ENCODE measurements at regions of chr4 and their contacts with region 1.

Region 1: GRCh38 chr4:122224348-122224747 is 72.2 kb downstream of the BLTP1 start:
- DNase-seq: peak in 1 of 2 donors; percentile 5
- ATAC-seq: no peak
- H3K4me3 ChIP-seq: no peak overlapping the region
- H3K27ac ChIP-seq: no peak overlapping the region
- H3K4me1 ChIP-seq: peaks cover 0 to 4% (median 0%) of the 10 kb centered on the region in 9 donors
- H3K27me3 ChIP-seq: no peaks in the 10 kb centered on the region
- CTCF ChIP-seq: peak in 4 of 9 donors; percentile 29 to 45 (median 34)

Region 2: DNA sequence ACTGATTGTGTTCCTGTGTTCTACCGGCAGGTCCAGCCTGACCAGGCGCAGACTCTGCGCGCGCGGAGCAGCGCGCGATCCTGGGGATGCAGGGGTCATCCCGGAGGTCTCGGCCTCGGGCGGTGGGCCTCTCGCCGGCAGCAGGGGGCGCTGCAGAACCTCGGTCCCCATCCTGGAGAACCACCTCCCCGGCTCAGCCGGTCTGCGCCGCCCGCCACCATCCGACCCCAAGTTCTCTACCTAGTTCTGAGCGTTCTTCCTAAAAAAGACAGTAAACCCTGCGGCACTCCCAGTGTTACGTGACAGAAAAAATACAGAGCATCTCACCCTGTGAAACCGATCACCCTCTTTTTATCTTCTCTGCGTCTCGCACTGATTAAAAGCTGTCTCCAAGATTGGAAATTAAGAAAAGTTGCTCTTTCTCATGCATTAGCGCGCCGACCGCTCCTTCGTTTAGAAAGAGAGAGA is 274.1 kb before region 1 on chr4:
- intact Hi-C with region 1: loop called in 2 of 10 experiments (anchors 5 to 10 kb)
- DNase-seq: peak; percentile 75 to 85
- ATAC-seq: peak; percentile 88 to 97 (median 93)
- H3K4me3 ChIP-seq: peak overlapping the region; percentile 54 to 65 (median 62)
- H3K27ac ChIP-seq: peak overlapping the region in 1 of 10 donors; percentile 45
- H3K4me1 ChIP-seq: peaks cover 0 to 23% (median 17%) of the 10 kb centered on the region in 9 donors
- H3K27me3 ChIP-seq: peaks cover 4 to 81% (median 61%) of the 10 kb centered on the region in 7 donors
- CTCF ChIP-seq: peak; percentile 51 to 88 (median 77)

Region 3: GRCh38 chr4:121998002-121998401 is 226.3 kb before region 1 on chr4:
- intact Hi-C with region 1: loop called in 1 of 10 experiments (anchors 2 kb)
- DNase-seq: peak in 1 of 2 donors; percentile 4
- ATAC-seq: peak in 3 of 8 donors; percentile 21 to 74 (median 69)
- H3K4me3 ChIP-seq: no peak overlapping the region
- H3K27ac ChIP-seq: no peak overlapping the region
- H3K4me1 ChIP-seq: no peaks in the 10 kb centered on the region
- H3K27me3 ChIP-seq: peaks cover 0 to 15% (median 10%) of the 10 kb centered on the region in 7 donors
- CTCF ChIP-seq: peak in 7 of 9 donors; percentile 32 to 57 (median 47)